HAP-1 (cell line): ENCODE measurements at regions of chr2 and their contacts with region 1.

Region 1: DNA sequence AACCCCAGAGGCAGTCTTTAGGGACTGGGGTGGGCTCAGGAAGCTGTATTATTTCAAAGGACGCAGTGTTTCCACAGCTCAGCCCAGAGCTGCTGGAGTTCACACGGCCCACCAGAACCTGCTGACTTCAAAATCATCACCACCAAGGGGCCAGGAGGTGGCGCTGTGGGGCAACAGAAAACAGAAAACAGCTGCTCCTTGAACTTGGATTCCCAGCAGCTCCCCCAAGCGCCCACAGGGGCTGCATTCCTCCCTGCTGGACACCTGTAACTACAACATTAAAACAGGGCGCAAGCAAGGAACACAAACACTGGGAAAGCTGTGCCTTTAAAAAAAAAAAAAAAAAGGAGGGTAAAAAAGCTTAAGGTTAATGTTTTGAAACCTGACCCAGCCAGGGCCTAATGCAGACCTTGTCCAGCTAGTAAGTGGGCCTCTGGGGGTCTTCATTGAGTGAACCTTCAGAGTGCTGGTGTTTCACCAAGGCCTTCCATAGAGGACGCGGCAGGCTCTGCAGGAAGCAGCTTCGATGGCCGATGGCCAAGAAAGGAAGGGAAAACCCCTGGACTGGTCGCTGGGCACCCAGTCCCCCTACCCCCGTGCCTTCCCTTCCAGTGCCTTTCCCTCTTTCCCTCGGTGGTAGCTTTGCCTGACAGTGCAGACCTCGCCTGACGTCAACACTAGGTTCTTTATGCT is 25.9 kb downstream of the MLPH start:
- DNase-seq: peak; percentile 74 to 90
- H3K4me3 ChIP-seq: no peak overlapping the region
- H3K4me1 ChIP-seq: no peaks in the 10 kb centered on the region
- H3K27me3 ChIP-seq: peaks cover 8% of the 10 kb centered on the region

Region 2: DNA sequence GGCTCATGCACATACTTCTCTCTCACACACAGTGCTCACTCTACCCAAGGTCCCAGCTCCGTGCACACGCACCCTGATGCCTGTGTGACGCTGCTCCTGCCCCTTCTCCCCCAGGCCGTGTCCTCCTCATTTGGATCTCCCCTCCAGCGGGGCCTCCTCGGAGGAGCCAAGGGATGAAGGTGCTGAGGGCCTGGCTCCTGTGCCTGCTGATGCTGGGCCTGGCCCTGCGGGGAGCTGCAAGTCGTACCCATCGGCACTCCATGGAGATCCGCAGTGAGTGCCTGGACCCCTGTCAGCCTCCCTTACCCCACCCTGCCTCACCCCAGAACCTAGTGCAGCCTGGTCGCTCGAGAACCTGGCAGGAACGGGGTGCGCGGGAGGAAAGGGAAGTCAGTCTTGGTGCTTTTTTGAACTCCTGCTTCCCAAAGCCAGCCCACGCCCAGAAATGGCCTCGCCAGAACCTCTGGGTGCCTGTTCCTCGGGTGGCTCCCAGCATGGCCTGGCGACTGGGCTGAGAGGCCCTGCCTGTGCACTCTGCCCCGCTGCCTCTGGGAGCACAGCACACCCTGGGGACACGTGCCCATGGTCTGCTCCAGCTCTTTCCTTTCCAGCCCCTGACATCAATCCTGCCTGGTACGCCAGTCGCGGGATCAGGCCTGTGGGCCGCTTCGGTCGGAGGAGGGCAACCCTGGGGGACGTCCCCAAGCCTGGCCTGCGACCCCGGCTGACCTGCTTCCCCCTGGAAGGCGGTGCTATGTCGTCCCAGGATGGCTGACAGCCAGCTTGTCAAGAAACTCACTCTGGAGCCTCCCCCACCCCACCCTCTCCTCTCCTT is 53.7 kb after region 1 on chr2 and contains the start of gene PRLH:
- in situ Hi-C with region 1: loop called (anchors 5 kb)
- DNase-seq: no peak
- H3K4me3 ChIP-seq: no peak within 1 kb of the TSS
- H3K4me1 ChIP-seq: no peaks in the 10 kb centered on the region
- H3K27me3 ChIP-seq: peaks cover 12% of the 10 kb centered on the region; the same call in 1 of the 2 replicates

Region 3: GRCh38 chr2:237806334-237806733 is 293.4 kb after region 1 on chr2:
- in situ Hi-C with region 1: no loop called
- DNase-seq: no peak
- H3K4me3 ChIP-seq: no peak overlapping the region
- H3K4me1 ChIP-seq: no peaks in the 10 kb centered on the region
- H3K27me3 ChIP-seq: peaks cover 6% of the 10 kb centered on the region